Heart right ventricle (tissue), 16 donors: ENCODE measurements at regions of chr2 and their contacts with region 1.

Region 1: DNA sequence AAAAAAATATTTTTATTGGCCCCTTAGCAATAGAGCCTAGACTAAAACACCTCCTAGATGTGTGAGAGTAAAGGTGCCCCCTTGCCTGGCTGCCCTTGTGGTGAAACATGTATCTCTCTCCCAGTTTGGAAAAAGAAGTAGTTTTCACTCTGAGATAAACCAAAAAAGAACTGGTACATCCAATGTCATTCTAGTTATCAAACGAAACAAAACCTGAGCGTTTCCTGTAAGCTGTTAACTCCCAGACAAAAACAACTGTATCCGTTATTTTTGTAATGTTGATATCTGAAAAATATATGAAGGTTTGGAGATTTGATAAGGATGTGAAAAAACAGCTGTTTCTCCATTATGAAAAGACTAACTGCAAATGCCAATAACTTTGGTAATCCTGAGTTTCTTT is 24.3 kb downstream of the HEATR5B start:
- DNase-seq: no peak
- ATAC-seq: no peak
- H3K4me3 ChIP-seq: no peak overlapping the region
- H3K27ac ChIP-seq: no peak overlapping the region
- H3K4me1 ChIP-seq: peaks cover 0 to 16% (median 0%) of the 10 kb centered on the region in 9 donors
- H3K27me3 ChIP-seq: no peaks in the 10 kb centered on the region
- CTCF ChIP-seq: no peak

Region 2: DNA sequence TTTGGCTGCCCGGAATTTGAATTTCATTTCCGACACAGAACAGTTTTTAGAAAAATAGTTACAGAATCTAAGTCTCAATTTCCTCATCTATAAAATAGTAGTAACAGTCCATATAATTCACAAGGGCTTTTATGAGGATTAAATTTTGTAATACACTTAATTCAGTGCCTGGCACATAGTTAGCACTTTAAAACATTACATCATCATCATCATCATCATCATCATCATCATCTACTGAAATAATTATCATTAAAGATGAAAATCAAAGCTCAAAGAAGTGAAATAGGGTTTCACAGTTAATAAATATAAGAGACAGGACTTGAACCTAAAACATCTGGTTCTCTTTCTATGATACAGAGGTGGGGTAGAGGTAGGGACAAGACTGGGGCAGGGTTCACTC is 11.1 kb after region 1 on chr2:
- intact Hi-C with region 1: loop called in 1 of 10 experiments (anchors 1 kb)
- DNase-seq: no peak
- ATAC-seq: no peak
- H3K4me3 ChIP-seq: no peak overlapping the region
- H3K27ac ChIP-seq: no peak overlapping the region
- H3K4me1 ChIP-seq: no peaks in the 10 kb centered on the region
- H3K27me3 ChIP-seq: no peaks in the 10 kb centered on the region
- CTCF ChIP-seq: no peak

Region 3: GRCh38 chr2:37083873-37084794 is 24.3 kb after region 1 on chr2 and contains the starts of genes GPATCH11 and HEATR5B:
- intact Hi-C with region 1: no loop called
- DNase-seq: peak; percentile 93 to 95
- ATAC-seq: peak; percentile 98 to 100 (median 99)
- H3K4me3 ChIP-seq: peak within 1 kb of the TSS; percentile 59 to 92 (median 80)
- H3K27ac ChIP-seq: peak within 1 kb of the TSS; percentile 40 to 89 (median 85)
- H3K4me1 ChIP-seq: peaks cover 4 to 57% (median 46%) of the 10 kb centered on the region in 9 donors
- H3K27me3 ChIP-seq: no peaks in the 10 kb centered on the region
- CTCF ChIP-seq: no peak
- total RNA-seq, gene GPATCH11: 3.9 to 6.1 (median 5.7) TPM
- total RNA-seq, gene HEATR5B: 14.7 to 27.4 (median 18.2) TPM

Region 4: DNA sequence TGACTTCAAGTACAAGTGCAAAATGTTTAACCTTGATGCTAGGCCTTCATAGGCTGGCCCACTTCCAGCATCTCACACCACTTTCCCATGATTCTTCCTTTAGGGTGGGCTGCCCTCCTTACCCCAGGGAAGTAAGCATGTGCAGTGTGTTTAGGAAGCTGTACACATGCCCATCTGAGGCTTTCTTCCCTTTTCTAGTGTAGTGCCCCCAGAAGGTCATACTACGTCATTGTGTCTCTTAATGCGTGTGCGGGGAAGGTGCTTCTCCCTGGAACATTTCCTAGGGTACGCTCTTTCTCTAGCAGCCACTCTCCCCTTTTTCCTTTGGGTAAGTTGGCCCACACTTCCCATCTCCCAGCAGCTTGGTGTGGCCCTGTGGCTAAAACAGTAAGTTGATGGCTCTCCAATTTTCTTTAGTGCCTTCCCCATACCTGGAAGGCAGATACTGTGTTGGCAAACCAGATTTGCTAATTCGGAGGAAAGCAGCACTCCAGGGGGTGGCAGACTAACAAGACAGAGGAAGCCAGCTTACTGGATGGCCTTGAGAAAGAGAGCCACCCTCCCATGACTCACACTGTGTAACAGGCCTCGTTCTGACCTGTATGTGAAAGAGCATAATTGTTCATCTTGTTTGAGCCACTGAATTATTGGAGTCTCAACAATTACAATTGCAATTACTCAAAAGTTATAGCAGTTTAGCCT is 129.8 kb after region 1 on chr2:
- intact Hi-C with region 1: no loop called
- DNase-seq: no peak
- ATAC-seq: peak in 3 of 8 donors; percentile 42 to 47 (median 43)
- H3K4me3 ChIP-seq: no peak overlapping the region
- H3K27ac ChIP-seq: peak overlapping the region in 1 of 10 donors; percentile 47
- H3K4me1 ChIP-seq: peaks cover 0 to 13% (median 0%) of the 10 kb centered on the region in 9 donors
- H3K27me3 ChIP-seq: peaks cover 0 to 3% (median 0%) of the 10 kb centered on the region in 7 donors
- CTCF ChIP-seq: no peak